ENCODE measurements at regions of chr1 and their contacts with region 1.

Region 1: GRCh38 chr1:27849951-27850350 is 19.4 kb downstream of the PPP1R8 start:
- DNase-seq: no peak
- ATAC-seq: no peak
- H3K4me3 ChIP-seq: no peak overlapping the region
- H3K27ac ChIP-seq: no peak overlapping the region
- H3K4me1 ChIP-seq: no peaks in the 10 kb centered on the region
- H3K27me3 ChIP-seq: no peaks in the 10 kb centered on the region
- CTCF ChIP-seq: no peak
- EP300 ChIP-seq: no peak
- POLR2A ChIP-seq: no peak
- RAD21 ChIP-seq: no peak

Region 2: GRCh38 chr1:27542408-27543273 is 307.3 kb before region 1 on chr1:
- CTCF ChIA-PET with region 1: no interaction called
- POLR2A ChIA-PET with region 1: no interaction called
- RAD21 ChIA-PET with region 1: no interaction called
- SMC1A ChIA-PET with region 1: no interaction called
- in situ Hi-C with region 1: no loop called
- intact Hi-C with region 1: no loop called
- DNase-seq: no peak
- ATAC-seq: no peak; the same call in 1 of the 3 replicates
- H3K4me3 ChIP-seq: no peak overlapping the region
- H3K27ac ChIP-seq: no peak overlapping the region
- H3K4me1 ChIP-seq: no peaks in the 10 kb centered on the region
- H3K27me3 ChIP-seq: no peaks in the 10 kb centered on the region
- CTCF ChIP-seq: no peak
- EP300 ChIP-seq: no peak
- POLR2A ChIP-seq: no peak
- RAD21 ChIP-seq: no peak

Region 3: GRCh38 chr1:27979151-27979858 is 129.4 kb after region 1 on chr1:
- CTCF ChIA-PET with region 1: interaction called, 10 read pairs
- POLR2A ChIA-PET with region 1: no interaction called
- RAD21 ChIA-PET with region 1: no interaction called
- SMC1A ChIA-PET with region 1: no interaction called
- in situ Hi-C with region 1: no loop called
- intact Hi-C with region 1: no loop called
- DNase-seq: peak; percentile 19
- ATAC-seq: peak; percentile 87
- H3K4me3 ChIP-seq: no peak overlapping the region
- H3K27ac ChIP-seq: peak overlapping the region; percentile 25; the same call in 1 of the 2 replicates
- H3K4me1 ChIP-seq: peaks cover 11% of the 10 kb centered on the region
- H3K27me3 ChIP-seq: no peaks in the 10 kb centered on the region
- CTCF ChIP-seq: peak; percentile 25 to 52 (median 51); a peak in 3 of 6 replicates
- EP300 ChIP-seq: no peak
- POLR2A ChIP-seq: no peak
- RAD21 ChIP-seq: peak; percentile 77